Left colon (tissue), 2 donors: ENCODE measurements at regions of chr20 and their contacts with region 1.

Region 1: DNA sequence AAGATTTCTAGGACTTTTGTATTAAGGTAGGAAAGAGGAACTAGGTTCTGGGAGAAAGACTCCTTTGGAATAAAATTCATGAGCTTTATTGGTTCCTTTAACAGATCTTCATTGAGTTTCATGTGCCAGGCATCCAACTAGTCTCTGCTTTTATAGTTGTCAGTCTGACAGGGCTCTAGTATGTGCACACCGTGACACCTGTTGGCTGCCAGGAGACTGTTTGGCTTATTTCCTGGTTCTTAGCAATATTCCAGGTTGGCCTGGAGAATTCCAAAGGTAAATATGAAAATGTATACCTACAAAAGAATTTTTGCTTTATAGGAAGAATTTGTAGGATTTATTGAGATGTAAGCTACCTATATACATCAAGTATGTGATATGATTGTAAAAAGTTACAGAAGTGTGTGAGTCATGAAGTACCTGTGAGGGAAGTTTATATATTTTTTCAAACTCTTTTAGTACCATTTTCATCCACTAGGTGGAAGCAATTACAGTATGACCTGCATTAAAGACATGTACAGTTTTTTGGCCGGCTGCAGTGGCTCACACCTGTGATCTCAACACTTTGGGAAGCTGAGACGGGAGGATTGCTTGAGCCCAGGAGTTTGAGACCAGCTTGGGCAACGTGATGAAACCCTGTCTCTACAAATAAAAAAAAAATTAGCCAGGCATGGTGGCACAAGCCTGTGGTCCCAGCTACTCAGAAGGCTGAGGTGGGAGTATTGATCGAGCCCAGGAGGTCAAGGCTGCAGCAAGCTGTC is 35.2 kb downstream of the NDUFAF5 start:
- DNase-seq: peak in 1 of 2 donors; percentile 15
- ATAC-seq: peak; percentile 88

Region 2: GRCh38 chr20:13638496-13639222 is 181.4 kb before region 1 on chr20 and contains the start of gene TASP1:
- intact Hi-C with region 1: no loop called
- DNase-seq: peak; percentile 98
- ATAC-seq: peak; percentile 98
- total RNA-seq, gene TASP1: 14.3 TPM

Region 3: GRCh38 chr20:13788167-13788834 is 31.8 kb before region 1 on chr20:
- intact Hi-C with region 1: no loop called
- DNase-seq: peak; percentile 38 to 54
- ATAC-seq: no peak

Region 4: GRCh38 chr20:13915284-13915683 is 95.2 kb after region 1 on chr20:
- intact Hi-C with region 1: no loop called
- DNase-seq: no peak
- ATAC-seq: no peak

Region 5: GRCh38 chr20:14051454-14051853 is 231.4 kb after region 1 on chr20:
- intact Hi-C with region 1: loop called in 1 of 2 experiments (anchors 5 kb)
- DNase-seq: no peak
- ATAC-seq: no peak